ENCODE measurements at regions of chr15 and their contacts with region 1.

Region 1: GRCh38 chr15:31840849-31841476 is 189.4 kb upstream of the CHRNA7 start:
- DNase-seq: peak in 4 of 5 donors; percentile 53 to 67 (median 60)
- ATAC-seq: peak; percentile 94 to 98 (median 96)
- H3K4me3 ChIP-seq: peak overlapping the region in 3 of 12 donors; percentile 12 to 23 (median 12)
- H3K27ac ChIP-seq: peak overlapping the region in 9 of 12 donors; percentile 41 to 76 (median 56)
- H3K4me1 ChIP-seq: peaks cover 0 to 16% (median 5%) of the 10 kb centered on the region in 12 donors
- H3K27me3 ChIP-seq: no peaks in the 10 kb centered on the region
- CTCF ChIP-seq: no peak
- POLR2A ChIP-seq: no peak

Region 2: GRCh38 chr15:30943654-30944335 is 897.2 kb before region 1 on chr15:
- intact Hi-C with region 1: no loop called
- DNase-seq: no peak
- ATAC-seq: peak in 1 of 4 donors; percentile 16
- H3K4me3 ChIP-seq: no peak overlapping the region
- H3K27ac ChIP-seq: no peak overlapping the region
- H3K4me1 ChIP-seq: no peaks in the 10 kb centered on the region
- H3K27me3 ChIP-seq: no peaks in the 10 kb centered on the region
- CTCF ChIP-seq: no peak
- POLR2A ChIP-seq: no peak

Region 3: GRCh38 chr15:31216215-31216911 is 624.6 kb before region 1 on chr15:
- intact Hi-C with region 1: no loop called
- DNase-seq: peak; percentile 88 to 96 (median 91)
- ATAC-seq: peak; percentile 57 to 86 (median 84)
- H3K4me3 ChIP-seq: peak overlapping the region in 11 of 12 donors; percentile 44 to 75 (median 66)
- H3K27ac ChIP-seq: peak overlapping the region; percentile 91 to 98 (median 96)
- H3K4me1 ChIP-seq: peaks cover 0 to 68% (median 33%) of the 10 kb centered on the region in 12 donors
- H3K27me3 ChIP-seq: no peaks in the 10 kb centered on the region
- CTCF ChIP-seq: no peak
- POLR2A ChIP-seq: peak in 1 of 2 donors; percentile 45

Region 4: GRCh38 chr15:31799715-31800321 is 41.1 kb before region 1 on chr15:
- intact Hi-C with region 1: loop called in 1 of 10 experiments (anchors 5 kb)
- DNase-seq: peak in 1 of 5 donors; percentile 53
- ATAC-seq: peak; percentile 62 to 89 (median 80)
- H3K4me3 ChIP-seq: no peak overlapping the region
- H3K27ac ChIP-seq: peak overlapping the region in 4 of 12 donors; percentile 28 to 62 (median 44)
- H3K4me1 ChIP-seq: peaks cover 0 to 14% (median 4%) of the 10 kb centered on the region in 12 donors
- H3K27me3 ChIP-seq: no peaks in the 10 kb centered on the region
- CTCF ChIP-seq: no peak
- POLR2A ChIP-seq: no peak

Region 5: DNA sequence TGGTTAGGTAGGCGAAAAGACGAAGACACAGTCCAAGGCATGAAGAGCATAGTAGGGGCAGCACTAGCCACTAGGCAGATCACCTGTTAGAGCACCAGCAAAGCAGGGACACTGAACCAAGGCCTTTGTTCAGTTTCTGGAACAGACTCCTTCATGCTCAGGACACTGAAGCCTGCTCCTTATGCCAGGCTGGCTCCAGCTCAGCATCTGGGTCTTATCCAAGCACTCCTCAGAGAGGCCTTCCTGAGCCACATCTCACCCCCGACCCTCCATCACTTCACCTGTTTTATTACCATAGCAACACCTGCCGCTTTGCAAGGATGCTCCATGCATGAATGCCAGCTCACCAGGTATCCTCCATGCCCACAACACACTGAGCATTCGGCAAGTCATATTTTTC is 16.9 kb before region 1 on chr15:
- intact Hi-C with region 1: loop called in 1 of 10 experiments (anchors 1 kb)
- DNase-seq: no peak
- ATAC-seq: no peak
- H3K4me3 ChIP-seq: no peak overlapping the region
- H3K27ac ChIP-seq: no peak overlapping the region
- H3K4me1 ChIP-seq: peaks cover 0 to 10% (median 0%) of the 10 kb centered on the region in 12 donors
- H3K27me3 ChIP-seq: no peaks in the 10 kb centered on the region
- CTCF ChIP-seq: no peak
- POLR2A ChIP-seq: no peak

Region 6: DNA sequence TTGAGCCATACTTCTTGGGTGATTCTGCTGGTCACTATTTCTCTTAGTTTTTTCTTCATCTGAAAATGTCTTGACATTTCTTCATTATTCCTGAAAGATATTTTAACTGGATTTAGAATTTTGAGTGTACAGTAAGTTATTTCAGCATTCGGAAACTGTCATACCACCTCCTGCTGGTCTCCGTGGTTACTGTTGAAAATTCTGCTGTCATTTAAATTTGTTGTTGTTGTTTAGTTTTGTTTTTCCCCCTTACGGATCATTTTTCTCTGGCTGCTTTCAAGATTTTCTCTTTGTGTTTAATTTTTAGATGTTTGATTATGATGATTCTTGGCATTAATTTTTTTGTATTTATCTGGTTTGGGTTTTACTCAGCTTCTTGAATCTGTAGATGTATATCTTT is 289.9 kb after region 1 on chr15:
- intact Hi-C with region 1: no loop called
- DNase-seq: no peak
- ATAC-seq: no peak
- H3K4me3 ChIP-seq: no peak overlapping the region
- H3K27ac ChIP-seq: no peak overlapping the region
- H3K4me1 ChIP-seq: no peaks in the 10 kb centered on the region
- H3K27me3 ChIP-seq: peaks cover 0 to 16% (median 0%) of the 10 kb centered on the region in 9 donors
- CTCF ChIP-seq: no peak
- POLR2A ChIP-seq: no peak